Activated B cell treated with CpG ODN at 0.5 μM for 24 hours (primary cell): ENCODE measurements at regions of chr2 and their contacts with region 1.

Region 1: GRCh38 chr2:60560734-60561644 is 7.5 kb upstream of the BCL11A start:
- DNase-seq: no peak
- ATAC-seq: peak; percentile 44
- H3K4me3 Mint-ChIP-seq: no peak overlapping the region
- H3K27ac Mint-ChIP-seq: no peak overlapping the region
- H3K4me1 Mint-ChIP-seq: peaks cover 46% of the 10 kb centered on the region
- H3K27me3 Mint-ChIP-seq: no peaks in the 10 kb centered on the region
- CTCF ChIP-seq: peak; percentile 20

Region 2: GRCh38 chr2:58571181-58571852 is 1989.7 kb before region 1 on chr2:
- CTCF ChIA-PET with region 1: no interaction called
- POLR2A ChIA-PET with region 1: no interaction called
- intact Hi-C with region 1: loop called (anchors 5 kb)
- DNase-seq: no peak
- ATAC-seq: peak; percentile 61
- H3K4me3 Mint-ChIP-seq: no peak overlapping the region
- H3K27ac Mint-ChIP-seq: no peak overlapping the region
- H3K4me1 Mint-ChIP-seq: peaks cover 12% of the 10 kb centered on the region
- H3K27me3 Mint-ChIP-seq: no peaks in the 10 kb centered on the region
- CTCF ChIP-seq: no peak

Region 3: DNA sequence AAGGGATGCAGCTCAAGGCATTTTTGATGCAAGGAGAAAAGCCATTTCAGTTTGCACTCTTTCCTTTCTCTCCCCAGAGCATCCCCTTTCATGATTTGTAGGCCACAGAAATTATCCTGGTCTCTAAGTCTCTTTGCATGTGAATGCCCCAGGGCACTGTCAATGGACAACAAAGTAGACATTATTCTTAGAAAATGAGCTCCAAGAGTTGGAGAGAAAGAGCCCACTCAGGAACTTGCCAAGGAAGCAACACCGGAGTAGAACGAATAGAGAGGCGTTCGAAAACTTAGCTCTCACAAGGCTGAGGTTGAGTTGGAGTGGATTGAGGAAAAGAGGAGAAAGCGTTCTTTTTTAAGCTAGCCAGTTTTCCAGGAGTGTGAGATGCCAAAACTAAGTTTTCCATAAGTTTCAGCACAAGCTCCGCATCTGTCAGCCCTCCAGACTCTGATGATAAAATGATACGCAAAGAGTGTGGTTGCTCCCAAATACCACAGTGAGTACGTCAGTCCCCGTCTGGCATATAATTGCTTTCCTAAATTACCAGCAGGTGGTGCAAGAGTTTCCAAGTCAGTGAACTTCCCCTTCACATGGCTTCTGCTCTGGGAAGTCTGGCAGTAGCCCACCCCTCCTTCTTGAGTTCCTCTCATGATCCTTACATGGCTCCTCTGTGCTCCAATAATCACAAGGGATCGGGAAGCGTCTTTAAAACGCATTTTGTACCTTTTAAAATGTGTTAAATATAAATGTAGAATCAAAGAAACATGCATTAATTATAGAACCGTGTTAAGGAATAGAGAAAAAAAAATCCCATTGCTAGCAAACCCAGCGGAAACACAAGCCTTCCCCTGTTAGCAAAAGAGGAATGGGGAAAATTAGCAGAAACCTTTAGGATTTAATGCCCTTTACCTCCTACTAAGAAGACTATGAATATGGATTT is 1259.3 kb before region 1 on chr2:
- CTCF ChIA-PET with region 1: interaction called, 30 read pairs
- POLR2A ChIA-PET with region 1: no interaction called
- intact Hi-C with region 1: loop called (anchors 1 kb)
- DNase-seq: no peak
- ATAC-seq: peak; percentile 67
- H3K4me3 Mint-ChIP-seq: no peak overlapping the region
- H3K27ac Mint-ChIP-seq: no peak overlapping the region
- H3K4me1 Mint-ChIP-seq: no peaks in the 10 kb centered on the region
- H3K27me3 Mint-ChIP-seq: peaks cover 2% of the 10 kb centered on the region
- CTCF ChIP-seq: no peak

Region 4: GRCh38 chr2:59449269-59449668 is 1111.7 kb before region 1 on chr2:
- CTCF ChIA-PET with region 1: interaction called, 9 read pairs
- POLR2A ChIA-PET with region 1: interaction called, 4 read pairs
- intact Hi-C with region 1: loop called (anchors 1 kb)
- DNase-seq: no peak
- ATAC-seq: peak; percentile 77
- H3K4me3 Mint-ChIP-seq: no peak overlapping the region
- H3K27ac Mint-ChIP-seq: no peak overlapping the region
- H3K4me1 Mint-ChIP-seq: no peaks in the 10 kb centered on the region
- H3K27me3 Mint-ChIP-seq: no peaks in the 10 kb centered on the region
- CTCF ChIP-seq: no peak

Region 5: DNA sequence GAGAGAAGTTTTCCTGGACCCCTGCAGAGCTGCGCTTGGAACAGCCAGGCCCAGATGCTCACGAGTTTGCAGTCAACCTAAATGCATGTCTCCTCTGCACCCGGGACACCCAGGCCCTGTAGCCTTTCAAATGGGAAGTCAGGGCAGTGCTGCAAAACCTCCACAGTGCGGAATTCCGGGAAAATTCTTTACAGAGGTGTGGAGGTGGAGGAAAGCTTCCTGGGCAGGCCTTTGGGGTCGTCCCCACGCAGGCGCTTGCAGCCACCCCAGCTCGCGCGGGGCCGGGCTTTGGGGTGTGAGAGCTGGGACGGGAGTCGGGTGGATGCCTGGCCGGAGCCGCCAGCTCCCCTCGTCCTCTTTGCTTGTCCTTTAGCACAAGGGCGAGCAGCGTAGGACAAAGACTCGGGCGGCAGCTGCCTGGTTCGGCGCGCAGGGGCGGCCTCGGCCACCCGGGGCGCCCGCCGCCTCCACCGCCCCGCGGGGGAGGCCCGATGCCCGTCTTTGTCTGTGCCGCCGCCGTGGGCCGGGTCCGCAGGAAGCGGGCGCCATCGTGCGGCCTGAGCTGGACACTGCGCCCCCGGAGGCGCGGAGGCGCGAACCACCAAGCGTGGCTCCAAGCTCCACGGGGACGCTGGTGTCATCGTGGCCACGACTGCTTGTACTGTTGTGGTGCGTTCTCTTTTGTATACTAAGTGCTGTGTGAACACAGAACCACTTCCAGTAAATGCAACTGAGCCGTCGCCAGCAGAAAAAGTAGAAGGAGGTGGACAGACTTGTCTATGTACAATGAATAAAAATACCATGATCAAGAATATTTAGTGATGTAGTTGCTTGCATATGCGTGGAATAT is 20.7 kb after region 1 on chr2:
- CTCF ChIA-PET with region 1: interaction called, 25 read pairs
- POLR2A ChIA-PET with region 1: interaction called, 5 read pairs
- intact Hi-C with region 1: loop called (anchors 2 kb)
- DNase-seq: peak; percentile 85
- ATAC-seq: peak; percentile 100
- H3K4me3 Mint-ChIP-seq: peak overlapping the region; percentile 70
- H3K27ac Mint-ChIP-seq: no peak overlapping the region
- H3K4me1 Mint-ChIP-seq: peaks cover 3% of the 10 kb centered on the region
- H3K27me3 Mint-ChIP-seq: peaks cover 10% of the 10 kb centered on the region
- CTCF ChIP-seq: peak; percentile 64

Region 6: GRCh38 chr2:60612033-60612432 is 51.0 kb after region 1 on chr2:
- CTCF ChIA-PET with region 1: no interaction called
- POLR2A ChIA-PET with region 1: no interaction called
- intact Hi-C with region 1: no loop called
- DNase-seq: no peak
- ATAC-seq: no peak
- H3K4me3 Mint-ChIP-seq: no peak overlapping the region
- H3K27ac Mint-ChIP-seq: no peak overlapping the region
- H3K4me1 Mint-ChIP-seq: no peaks in the 10 kb centered on the region
- H3K27me3 Mint-ChIP-seq: peaks cover 16% of the 10 kb centered on the region
- CTCF ChIP-seq: no peak

Region 7: DNA sequence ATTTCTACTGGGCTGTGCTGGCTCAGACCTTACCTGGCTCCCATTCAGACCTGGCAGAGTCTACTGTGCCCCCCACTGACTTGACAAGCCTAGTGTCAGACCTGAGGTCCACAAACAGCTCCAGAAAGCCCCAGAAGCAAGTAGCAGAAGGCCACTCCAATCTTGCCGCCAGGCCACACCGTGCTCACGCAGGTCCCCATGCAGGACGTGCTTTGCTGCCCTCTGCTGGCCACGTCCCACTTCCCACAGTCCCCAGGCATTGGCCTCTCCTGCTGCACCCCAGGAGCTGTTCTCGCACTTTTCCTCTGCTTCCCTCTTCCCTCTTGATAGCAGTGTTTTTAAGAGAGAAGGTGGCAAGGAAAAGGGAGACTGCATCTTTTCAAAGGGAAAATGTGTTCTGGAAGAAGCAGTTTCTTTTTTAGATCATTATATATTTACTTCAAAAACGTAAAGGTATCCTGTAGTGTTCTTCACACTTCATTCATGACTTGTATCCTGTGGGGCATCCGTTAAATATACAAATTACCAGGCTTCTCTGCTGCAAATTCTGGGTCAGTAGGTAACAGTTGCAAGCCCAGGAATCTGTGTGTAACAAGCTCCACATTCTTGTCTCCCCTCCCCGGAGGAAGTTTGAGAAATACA is 113.7 kb after region 1 on chr2:
- CTCF ChIA-PET with region 1: interaction called, 3 read pairs
- POLR2A ChIA-PET with region 1: no interaction called
- intact Hi-C with region 1: loop called (anchors 5 kb)
- DNase-seq: peak; percentile 77
- ATAC-seq: peak; percentile 100
- H3K4me3 Mint-ChIP-seq: no peak overlapping the region
- H3K27ac Mint-ChIP-seq: no peak overlapping the region
- H3K4me1 Mint-ChIP-seq: peaks cover 3% of the 10 kb centered on the region
- H3K27me3 Mint-ChIP-seq: peaks cover 2% of the 10 kb centered on the region
- CTCF ChIP-seq: peak; percentile 96